ENCODE measurements at regions of chr9 and their contacts with region 1.

Region 1: GRCh38 chr9:126623667-126624478 is 10.1 kb downstream of the LMX1B start:
- DNase-seq: no peak
- H3K4me3 ChIP-seq: peak overlapping the region in 2 of 3 donors; percentile 40 to 44
- H3K27ac ChIP-seq: peak overlapping the region; percentile 91 to 93
- H3K4me1 ChIP-seq: peaks cover 11 to 12% of the 10 kb centered on the region in 2 donors
- H3K27me3 ChIP-seq: peaks cover 0 to 42% of the 10 kb centered on the region in 2 donors
- CTCF ChIP-seq: no peak
- POLR2A ChIP-seq: no peak

Region 2: DNA sequence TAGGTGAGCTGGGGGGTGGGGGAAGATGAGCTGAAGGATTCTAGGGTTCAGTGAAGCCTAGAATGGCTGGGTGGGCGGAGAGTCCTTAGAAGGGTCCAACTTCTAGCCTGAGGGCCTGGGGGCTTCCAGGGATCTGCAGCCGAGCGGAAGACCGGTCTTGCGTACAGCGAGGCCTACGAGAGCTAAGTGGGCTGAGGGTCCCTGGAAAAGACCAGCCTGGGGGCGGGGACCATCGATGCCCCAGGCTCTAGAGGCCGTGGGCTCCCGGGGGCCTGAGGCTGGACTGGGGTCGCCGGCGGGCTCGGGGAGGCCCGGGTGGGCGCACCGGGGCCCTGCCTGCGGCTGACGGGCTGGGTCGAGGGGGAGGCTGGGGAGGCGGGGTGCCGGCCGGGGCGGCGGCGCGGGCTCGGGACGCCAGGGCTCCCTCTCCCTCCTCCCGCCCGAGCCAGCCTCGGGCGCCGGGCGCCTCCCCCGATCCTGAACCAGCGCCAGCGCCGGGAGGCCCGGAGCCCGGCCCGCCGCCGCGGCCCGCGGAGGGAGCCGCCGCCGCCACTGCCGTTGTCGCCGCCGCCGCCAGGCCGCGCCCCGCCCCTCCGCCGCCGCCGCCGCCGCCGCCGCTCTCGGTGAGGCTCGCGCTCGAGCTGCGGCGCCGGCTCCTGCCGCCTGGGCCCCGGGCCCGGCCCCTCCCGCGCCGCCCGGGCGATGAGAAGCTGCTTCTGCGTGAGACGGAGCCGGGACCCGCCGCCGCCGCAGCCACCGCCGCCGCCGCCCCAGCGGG is 297.5 kb before region 1 on chr9 and contains the start of gene MVB12B:
- intact Hi-C with region 1: no loop called
- DNase-seq: no peak
- H3K4me3 ChIP-seq: peak within 1 kb of the TSS; percentile 62 to 89 (median 68)
- H3K27ac ChIP-seq: peak within 1 kb of the TSS; percentile 82 to 88
- H3K4me1 ChIP-seq: no peaks in the 10 kb centered on the region
- H3K27me3 ChIP-seq: no peaks in the 10 kb centered on the region
- CTCF ChIP-seq: no peak
- POLR2A ChIP-seq: no peak
- total RNA-seq, gene MVB12B: 8.2 to 12.6 (median 9.9) TPM

Region 3: DNA sequence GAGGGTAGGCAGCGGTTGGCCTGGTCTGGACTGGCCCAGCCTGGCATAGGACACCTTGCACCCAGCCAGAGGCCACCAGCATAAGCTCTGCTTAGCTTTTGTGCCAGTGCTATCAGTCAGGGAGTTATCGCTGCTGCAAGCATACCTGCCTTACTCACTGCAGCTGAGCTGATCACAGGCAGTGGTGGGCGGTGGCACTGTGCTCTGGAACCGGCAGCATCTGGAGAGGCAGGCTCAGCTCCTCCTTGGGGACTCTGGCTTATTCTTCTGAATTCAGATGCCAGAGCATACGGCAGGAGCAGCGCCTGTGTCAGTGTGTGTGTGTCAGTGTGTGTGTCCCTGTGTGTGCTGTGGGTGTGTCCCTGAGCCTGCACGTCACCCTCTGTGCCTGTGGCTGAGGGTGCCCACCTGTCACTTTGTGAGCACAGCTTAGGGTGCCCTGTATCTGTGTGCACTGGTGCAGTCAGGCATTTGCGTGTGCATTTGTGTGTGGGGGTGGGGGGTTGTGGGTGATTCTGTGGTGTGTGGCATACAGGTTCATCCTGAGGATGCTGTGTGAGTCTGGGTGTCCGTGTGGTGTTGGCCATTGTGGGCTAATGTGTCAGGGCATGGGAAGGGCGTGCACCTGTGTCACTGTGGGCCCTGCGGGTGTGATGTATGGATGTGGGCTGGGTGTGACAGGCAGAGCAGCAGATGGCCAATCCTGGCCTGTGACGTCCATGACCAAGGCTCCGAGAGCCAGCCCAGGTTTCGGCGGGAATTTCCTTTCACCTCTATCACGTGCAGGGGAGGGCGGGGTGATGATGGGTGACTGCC is 13.3 kb after region 1 on chr9:
- intact Hi-C with region 1: no loop called
- DNase-seq: no peak
- H3K4me3 ChIP-seq: no peak overlapping the region
- H3K27ac ChIP-seq: no peak overlapping the region
- H3K4me1 ChIP-seq: peaks cover 0 to 8% of the 10 kb centered on the region in 2 donors
- H3K27me3 ChIP-seq: peaks cover 0 to 11% of the 10 kb centered on the region in 2 donors
- CTCF ChIP-seq: no peak
- POLR2A ChIP-seq: no peak

Region 4: GRCh38 chr9:126661521-126662220 is 37.8 kb after region 1 on chr9:
- intact Hi-C with region 1: no loop called
- DNase-seq: peak in 1 of 2 donors; percentile 36
- H3K4me3 ChIP-seq: no peak overlapping the region
- H3K27ac ChIP-seq: peak overlapping the region; percentile 83 to 89
- H3K4me1 ChIP-seq: peaks cover 12 to 17% of the 10 kb centered on the region in 2 donors
- H3K27me3 ChIP-seq: no peaks in the 10 kb centered on the region
- CTCF ChIP-seq: no peak
- POLR2A ChIP-seq: no peak

Region 5: DNA sequence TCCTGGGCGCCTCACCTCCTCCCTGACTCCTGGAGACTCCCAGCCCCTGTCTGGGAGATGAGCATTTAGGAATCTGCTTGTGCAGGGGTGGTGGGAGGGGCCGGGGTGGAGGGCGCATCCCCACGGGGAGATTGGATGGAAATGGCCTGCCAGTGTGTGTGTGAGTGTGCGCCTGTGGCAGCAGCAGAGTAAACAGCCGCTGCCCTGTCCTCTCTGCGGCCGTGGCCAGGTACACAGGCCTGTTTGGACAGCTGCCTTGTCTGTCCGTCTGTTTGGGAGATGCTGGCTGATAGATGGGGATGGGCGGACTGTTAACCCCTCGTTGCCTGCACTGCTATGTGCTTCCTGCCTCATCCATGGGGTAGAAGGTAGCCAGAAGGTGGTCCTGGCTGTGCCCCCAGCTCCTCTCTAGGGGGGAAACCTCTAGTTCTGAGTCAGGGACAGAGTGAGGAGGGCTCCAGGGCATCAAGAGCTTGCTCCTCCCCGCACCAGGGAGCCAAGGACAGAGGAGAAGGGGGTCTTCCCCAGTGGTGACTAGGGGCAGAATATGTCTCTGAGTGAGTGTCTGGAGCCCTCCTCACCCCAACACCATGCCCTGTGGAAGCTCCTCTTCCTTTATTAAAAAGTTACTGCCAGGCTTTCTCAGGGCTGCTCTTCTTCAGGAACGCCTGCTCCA is 50.0 kb after region 1 on chr9:
- intact Hi-C with region 1: loop called (anchors 5 kb)
- DNase-seq: peak; percentile 64 to 75
- H3K4me3 ChIP-seq: peak overlapping the region in 1 of 3 donors; percentile 35
- H3K27ac ChIP-seq: peak overlapping the region; percentile 77 to 88
- H3K4me1 ChIP-seq: peaks cover 7 to 11% of the 10 kb centered on the region in 2 donors
- H3K27me3 ChIP-seq: peaks cover 0 to 5% of the 10 kb centered on the region in 2 donors
- CTCF ChIP-seq: no peak
- POLR2A ChIP-seq: no peak

Region 6: DNA sequence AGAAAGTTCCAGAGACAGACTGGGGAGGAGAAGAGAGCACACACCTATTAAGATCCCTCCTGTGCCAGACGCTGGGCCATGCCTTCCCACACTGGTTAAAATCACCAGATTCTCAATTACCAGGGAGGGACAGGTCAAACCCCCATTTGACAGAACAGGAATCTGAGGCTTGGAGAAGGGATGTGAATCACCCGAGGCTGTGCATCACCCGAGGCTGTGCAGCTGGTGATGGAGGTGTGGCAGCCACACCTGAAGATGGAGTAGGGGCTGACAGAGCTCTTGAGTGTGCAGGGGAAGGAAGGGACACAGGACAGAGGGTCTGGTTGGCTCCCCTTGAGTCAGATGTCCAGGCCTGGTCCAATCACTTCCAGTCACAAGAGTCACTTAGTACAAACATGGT is 60.5 kb after region 1 on chr9:
- intact Hi-C with region 1: no loop called
- DNase-seq: no peak
- H3K4me3 ChIP-seq: no peak overlapping the region
- H3K27ac ChIP-seq: no peak overlapping the region
- H3K4me1 ChIP-seq: no peaks in the 10 kb centered on the region
- H3K27me3 ChIP-seq: no peaks in the 10 kb centered on the region
- CTCF ChIP-seq: no peak
- POLR2A ChIP-seq: no peak

Region 7: DNA sequence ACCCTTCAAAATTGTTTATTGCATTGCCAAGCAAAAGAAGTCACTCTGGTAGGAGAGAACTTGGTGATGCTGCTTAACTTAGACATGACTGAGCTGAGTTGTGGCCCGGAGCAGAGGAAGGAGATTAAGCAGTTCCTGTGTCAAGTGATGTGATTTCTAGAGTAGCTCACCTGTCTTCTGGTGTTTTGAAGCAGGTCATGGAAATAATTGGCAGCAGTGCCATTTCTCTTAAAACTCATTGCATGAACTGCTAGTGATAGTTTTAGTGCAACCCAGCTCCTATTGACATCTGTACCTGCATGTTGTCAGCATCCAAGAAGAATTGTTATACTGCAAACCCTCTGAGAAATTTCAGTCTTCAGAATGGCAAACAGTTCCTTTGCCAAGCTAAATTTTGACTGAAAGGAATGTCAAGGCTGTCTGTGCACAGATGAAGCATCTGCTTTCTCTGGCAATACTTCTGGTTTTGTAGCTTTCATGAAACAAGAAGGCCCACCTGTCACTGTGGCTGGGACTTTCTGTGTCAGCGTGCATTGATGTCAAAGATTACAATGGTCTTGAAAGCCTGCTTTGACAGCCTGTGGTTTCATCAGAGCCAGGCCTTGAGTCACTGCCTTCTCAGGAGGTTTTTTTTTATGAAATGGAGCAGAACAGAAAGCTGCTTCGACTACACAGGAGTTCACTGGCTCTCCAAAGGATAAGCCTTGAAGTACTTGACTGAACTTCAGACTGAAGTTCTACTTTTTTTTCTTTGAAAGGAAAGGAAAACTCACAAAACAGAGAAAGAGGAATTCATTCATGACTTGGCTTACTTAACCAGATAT is 381.3 kb after region 1 on chr9:
- intact Hi-C with region 1: loop called (anchors 5 kb)
- DNase-seq: no peak
- H3K4me3 ChIP-seq: no peak overlapping the region
- H3K27ac ChIP-seq: peak overlapping the region in 1 of 2 donors; percentile 19
- H3K4me1 ChIP-seq: peaks cover 0 to 5% of the 10 kb centered on the region in 2 donors
- H3K27me3 ChIP-seq: no peaks in the 10 kb centered on the region
- CTCF ChIP-seq: no peak
- POLR2A ChIP-seq: no peak

Measured in breast epithelium (tissue), 4 donors.